ENCODE measurements at regions of chr21 and their contacts with region 1.

Region 1: GRCh38 chr21:44574444-44575306 is 1.1 kb downstream of the KRTAP10-4 start:
- DNase-seq: no peak
- H3K4me3 ChIP-seq: no peak overlapping the region
- H3K27ac ChIP-seq: no peak overlapping the region
- H3K4me1 ChIP-seq: no peaks in the 10 kb centered on the region
- H3K27me3 ChIP-seq: peaks cover 2% of the 10 kb centered on the region
- CTCF ChIP-seq: peak; percentile 6 to 15

Region 2: DNA sequence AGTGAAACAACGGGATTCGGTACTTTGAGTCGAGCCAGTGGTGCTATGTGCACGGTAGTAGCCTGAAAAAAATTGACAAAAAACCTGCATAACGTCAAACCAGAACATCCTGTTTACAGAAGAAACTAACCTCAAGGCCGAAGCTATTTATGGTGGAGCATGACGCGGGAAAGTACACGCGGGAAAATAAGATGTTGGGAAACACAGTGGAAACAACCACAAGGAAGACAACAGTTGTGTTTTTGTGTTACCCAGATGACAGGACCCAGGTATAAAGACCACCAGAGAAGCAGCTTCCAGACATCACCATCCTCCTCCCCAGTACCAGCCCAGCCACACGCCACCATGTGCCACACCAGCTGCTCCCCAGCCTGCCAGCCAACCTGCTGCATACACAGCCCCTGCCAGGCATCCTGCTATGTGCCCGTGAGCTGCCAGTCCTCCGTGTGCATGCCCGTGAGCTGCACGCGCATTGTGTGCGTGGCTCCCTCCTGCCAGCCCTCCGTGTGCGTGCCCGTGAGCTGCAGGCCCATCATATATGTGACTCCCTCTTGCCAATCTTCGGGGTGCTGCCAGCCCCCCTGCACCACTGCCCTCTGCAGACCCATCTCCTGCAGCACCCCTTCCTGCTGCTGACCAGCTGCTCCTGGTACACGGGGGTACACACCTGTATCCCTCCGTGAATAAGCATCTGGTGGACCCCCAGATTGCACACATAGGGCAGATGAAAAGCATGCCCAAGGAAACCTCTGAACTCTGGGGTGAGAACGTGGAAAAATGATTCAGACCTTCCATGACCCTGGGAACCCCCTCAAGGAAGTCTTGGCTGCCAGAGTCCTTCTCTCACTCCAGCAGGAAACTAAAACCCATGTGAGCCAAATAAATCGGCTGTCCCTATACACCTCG is 83.2 kb after region 1 on chr21 and contains the start of gene KRTAP12-3:
- CTCF ChIA-PET with region 1: no interaction called
- dilution Hi-C with region 1: loop called (anchors 10 kb)
- in situ Hi-C with region 1: no loop called
- intact Hi-C with region 1: no loop called
- DNase-seq: no peak
- H3K4me3 ChIP-seq: no peak within 1 kb of the TSS
- H3K27ac ChIP-seq: no peak within 1 kb of the TSS
- H3K4me1 ChIP-seq: no peaks in the 10 kb centered on the region
- H3K27me3 ChIP-seq: peaks cover 2% of the 10 kb centered on the region
- CTCF ChIP-seq: no peak
- total RNA-seq, gene KRTAP12-3: not detected

Measured in mammary epithelial cell (primary cell).